Left ventricle myocardium inferior (tissue), 1 donor: ENCODE measurements at regions of chr21 and their contacts with region 1.

Region 1: GRCh38 chr21:36747815-36748383 is 49.0 kb downstream of the SIM2 start:
- DNase-seq: peak; percentile 62
- H3K4me3 ChIP-seq: peak overlapping the region; percentile 72
- H3K27ac ChIP-seq: peak overlapping the region; percentile 36
- H3K4me1 ChIP-seq: peaks cover 19% of the 10 kb centered on the region
- H3K27me3 ChIP-seq: peaks cover 26% of the 10 kb centered on the region
- CTCF ChIP-seq: peak; percentile 23

Region 2: DNA sequence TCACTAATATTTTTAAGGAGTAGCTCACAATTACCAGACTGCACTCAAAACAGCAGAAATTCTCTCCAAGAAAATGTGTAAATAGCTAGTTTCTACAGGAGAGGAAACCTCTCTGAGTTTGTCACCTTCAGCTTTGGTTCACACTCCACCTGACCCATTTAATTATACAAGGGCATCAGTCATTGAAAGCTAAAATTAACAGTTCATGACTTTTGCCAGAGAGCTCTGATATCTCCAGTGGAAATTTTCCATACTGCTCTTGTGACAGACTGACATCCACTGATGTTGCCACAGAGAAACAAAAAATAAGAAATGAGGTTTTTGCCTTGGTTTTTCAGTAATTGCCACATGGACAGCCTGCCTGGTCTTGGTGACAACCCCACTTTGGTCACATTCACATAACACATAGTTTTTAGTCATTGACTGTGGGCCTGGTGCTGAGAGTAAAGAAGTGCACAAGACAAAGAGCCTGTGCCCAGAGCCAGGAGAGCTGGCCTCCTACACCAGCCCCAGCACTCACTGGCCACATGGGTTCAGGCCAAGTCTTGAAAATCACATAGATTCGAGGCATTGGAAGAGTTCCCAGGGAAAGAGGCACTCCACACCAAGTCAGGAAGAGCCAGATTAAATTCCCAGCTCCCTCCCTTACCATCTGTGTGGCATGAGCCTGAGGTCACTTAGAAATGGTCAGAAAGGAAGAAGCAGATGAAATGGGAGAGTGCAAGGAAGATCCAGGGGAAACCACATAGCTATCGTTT is 62.8 kb before region 1 on chr21:
- intact Hi-C with region 1: no loop called
- DNase-seq: no peak
- H3K4me3 ChIP-seq: no peak overlapping the region
- H3K27ac ChIP-seq: peak overlapping the region; percentile 83
- H3K4me1 ChIP-seq: peaks cover 9% of the 10 kb centered on the region
- H3K27me3 ChIP-seq: peaks cover 86% of the 10 kb centered on the region
- CTCF ChIP-seq: no peak

Region 3: DNA sequence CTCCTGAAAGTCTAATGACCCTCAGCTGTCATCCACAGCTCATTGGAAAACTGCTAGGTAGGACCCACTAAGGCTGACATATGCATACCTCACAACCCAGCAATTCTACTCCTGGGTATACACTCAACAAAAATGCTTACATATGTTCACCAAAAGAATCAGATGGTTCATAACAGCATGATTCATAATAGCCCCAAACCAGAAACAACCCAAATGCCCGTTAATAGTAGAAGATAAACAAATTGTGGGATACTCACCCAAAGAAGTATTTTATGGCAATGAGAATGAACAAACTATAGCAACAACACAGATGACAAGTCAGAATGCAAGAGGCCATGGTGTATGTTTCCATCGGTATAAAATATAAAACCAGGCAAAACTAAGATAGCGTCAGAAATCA is 94.0 kb after region 1 on chr21:
- intact Hi-C with region 1: no loop called
- DNase-seq: no peak
- H3K4me3 ChIP-seq: no peak overlapping the region
- H3K27ac ChIP-seq: no peak overlapping the region
- H3K4me1 ChIP-seq: no peaks in the 10 kb centered on the region
- H3K27me3 ChIP-seq: no peaks in the 10 kb centered on the region
- CTCF ChIP-seq: no peak

Region 4: DNA sequence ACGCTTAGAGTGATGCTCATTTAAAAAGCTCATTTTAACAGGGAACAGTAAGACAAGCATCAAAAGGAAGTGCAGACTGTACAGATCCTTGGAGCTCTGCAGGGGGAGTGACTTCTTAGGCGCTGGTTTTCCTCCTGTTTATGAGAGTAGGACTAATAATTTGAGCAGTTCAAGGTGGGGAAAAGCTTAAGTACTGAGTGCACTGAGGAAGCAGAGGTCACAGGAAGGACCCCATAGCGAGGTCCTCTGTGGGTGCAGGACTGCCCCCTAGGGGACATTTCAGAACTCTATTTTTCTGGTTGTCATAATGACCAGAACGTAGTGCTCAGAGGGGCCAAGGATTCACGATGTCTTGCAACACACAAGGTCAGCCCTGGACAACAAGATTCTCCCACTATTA is 106.5 kb after region 1 on chr21:
- intact Hi-C with region 1: loop called (anchors 10 kb)
- DNase-seq: no peak
- H3K4me3 ChIP-seq: no peak overlapping the region
- H3K27ac ChIP-seq: no peak overlapping the region
- H3K4me1 ChIP-seq: peaks cover 13% of the 10 kb centered on the region
- H3K27me3 ChIP-seq: no peaks in the 10 kb centered on the region
- CTCF ChIP-seq: peak; percentile 73

Region 5: GRCh38 chr21:36917471-36918158 is 169.7 kb after region 1 on chr21:
- intact Hi-C with region 1: loop called (anchors 10 kb)
- DNase-seq: no peak
- H3K4me3 ChIP-seq: no peak overlapping the region
- H3K27ac ChIP-seq: no peak overlapping the region
- H3K4me1 ChIP-seq: peaks cover 19% of the 10 kb centered on the region
- H3K27me3 ChIP-seq: no peaks in the 10 kb centered on the region
- CTCF ChIP-seq: peak; percentile 72